Psoas muscle (tissue), 8 donors: ENCODE measurements at regions of chr9 and their contacts with region 1.

Region 1: DNA sequence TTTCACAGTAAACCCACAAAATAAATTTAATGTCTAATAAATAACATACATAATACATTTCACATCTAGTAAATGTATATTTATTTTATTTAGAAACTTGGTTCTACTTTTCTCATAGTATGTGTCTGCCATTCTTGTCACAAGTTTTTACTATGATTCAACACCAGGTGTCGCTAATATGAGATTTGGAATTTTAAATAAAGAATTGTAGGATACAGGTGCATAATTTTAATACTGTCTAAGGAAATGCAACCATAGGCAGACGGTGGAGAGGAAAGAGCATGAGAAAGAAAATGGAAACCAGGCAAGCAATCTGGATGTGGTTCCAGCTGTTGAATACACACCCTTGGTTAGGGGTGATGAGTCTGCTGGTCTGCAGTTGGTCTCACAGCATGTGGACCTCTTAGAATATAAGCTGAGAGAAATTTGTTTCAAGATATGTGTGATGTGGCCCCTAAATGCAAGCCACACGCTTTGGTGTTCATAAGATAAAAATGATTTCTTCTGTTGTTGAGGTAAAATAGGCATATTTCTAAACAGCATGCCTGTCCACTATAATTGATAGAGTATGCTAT is 114.7 kb upstream of the TXNDC8 start:
- DNase-seq: no peak
- ATAC-seq: no peak
- H3K4me3 ChIP-seq: no peak overlapping the region
- H3K27ac ChIP-seq: no peak overlapping the region
- H3K4me1 ChIP-seq: no peaks in the 10 kb centered on the region
- H3K27me3 ChIP-seq: no peaks in the 10 kb centered on the region
- CTCF ChIP-seq: peak; percentile 35

Region 2: GRCh38 chr9:110015759-110016158 is 436.6 kb before region 1 on chr9:
- intact Hi-C with region 1: no loop called
- DNase-seq: no peak
- ATAC-seq: peak in 2 of 4 donors; percentile 49 to 57
- H3K4me3 ChIP-seq: no peak overlapping the region
- H3K27ac ChIP-seq: peak overlapping the region; percentile 47
- H3K4me1 ChIP-seq: peaks cover 5% of the 10 kb centered on the region
- H3K27me3 ChIP-seq: no peaks in the 10 kb centered on the region
- CTCF ChIP-seq: no peak

Region 3: DNA sequence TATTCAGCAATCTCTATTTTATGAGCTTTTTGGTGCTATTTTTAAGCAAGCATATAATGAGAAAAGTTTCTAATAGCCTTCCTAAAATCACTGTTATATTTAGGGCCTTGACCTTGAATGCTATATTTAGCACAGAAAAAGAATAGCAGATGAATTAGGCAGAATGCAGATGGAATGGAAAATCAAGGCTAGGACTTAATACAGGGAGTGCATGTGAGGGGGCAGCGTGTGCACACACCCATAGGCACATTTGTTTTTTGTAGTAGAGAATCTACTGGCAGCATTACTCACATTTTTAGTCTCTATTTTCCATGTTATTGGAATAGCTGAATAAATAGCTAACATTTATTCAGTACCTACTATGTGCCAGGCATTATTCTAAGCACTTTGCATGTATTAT is 47.3 kb after region 1 on chr9:
- intact Hi-C with region 1: no loop called
- DNase-seq: no peak
- ATAC-seq: no peak
- H3K4me3 ChIP-seq: no peak overlapping the region
- H3K27ac ChIP-seq: no peak overlapping the region
- H3K4me1 ChIP-seq: no peaks in the 10 kb centered on the region
- H3K27me3 ChIP-seq: no peaks in the 10 kb centered on the region
- CTCF ChIP-seq: no peak

Region 4: GRCh38 chr9:110615498-110615897 is 163.2 kb after region 1 on chr9:
- intact Hi-C with region 1: loop called in 1 of 2 experiments (anchors 10 kb)
- DNase-seq: no peak
- ATAC-seq: no peak
- H3K4me3 ChIP-seq: no peak overlapping the region
- H3K27ac ChIP-seq: no peak overlapping the region
- H3K4me1 ChIP-seq: no peaks in the 10 kb centered on the region
- H3K27me3 ChIP-seq: no peaks in the 10 kb centered on the region
- CTCF ChIP-seq: no peak